ENCODE measurements at regions of chr19 and their contacts with region 1.

Region 1: GRCh38 chr19:46614114-46614722 is 10.7 kb downstream of the PTGIR start:
- DNase-seq: no peak
- H3K4me3 ChIP-seq: no peak overlapping the region
- H3K27me3 ChIP-seq: no peaks in the 10 kb centered on the region
- CTCF ChIP-seq: peak; percentile 92

Region 2: GRCh38 chr19:46600384-46601317 is 13.6 kb before region 1 on chr19:
- CTCF ChIA-PET with region 1: interaction called, 20 read pairs
- POLR2A ChIA-PET with region 1: no interaction called
- DNase-seq: peak; percentile 70
- H3K4me3 ChIP-seq: peak overlapping the region; percentile 99
- H3K27me3 ChIP-seq: peaks cover 1% of the 10 kb centered on the region; the same call in 1 of the 2 replicates
- CTCF ChIP-seq: no peak

Region 3: GRCh38 chr19:46624958-46625661 is 10.9 kb after region 1 on chr19 and contains the start of gene PTGIR:
- CTCF ChIA-PET with region 1: interaction called, 25 read pairs
- POLR2A ChIA-PET with region 1: no interaction called
- DNase-seq: no peak
- H3K4me3 ChIP-seq: peak within 1 kb of the TSS; percentile 52
- H3K27me3 ChIP-seq: no peaks in the 10 kb centered on the region
- CTCF ChIP-seq: no peak
- polyA plus RNA-seq, gene PTGIR: 16.9 and 27.8 TPM in 2 replicates

Region 4: GRCh38 chr19:46634045-46634655 is 19.9 kb after region 1 on chr19:
- CTCF ChIA-PET with region 1: interaction called, 15 read pairs
- POLR2A ChIA-PET with region 1: interaction called, 3 read pairs
- DNase-seq: no peak
- H3K4me3 ChIP-seq: peak overlapping the region; percentile 36
- H3K27me3 ChIP-seq: no peaks in the 10 kb centered on the region
- CTCF ChIP-seq: no peak